ENCODE measurements at regions of chr12 and their contacts with region 1.

Region 1: DNA sequence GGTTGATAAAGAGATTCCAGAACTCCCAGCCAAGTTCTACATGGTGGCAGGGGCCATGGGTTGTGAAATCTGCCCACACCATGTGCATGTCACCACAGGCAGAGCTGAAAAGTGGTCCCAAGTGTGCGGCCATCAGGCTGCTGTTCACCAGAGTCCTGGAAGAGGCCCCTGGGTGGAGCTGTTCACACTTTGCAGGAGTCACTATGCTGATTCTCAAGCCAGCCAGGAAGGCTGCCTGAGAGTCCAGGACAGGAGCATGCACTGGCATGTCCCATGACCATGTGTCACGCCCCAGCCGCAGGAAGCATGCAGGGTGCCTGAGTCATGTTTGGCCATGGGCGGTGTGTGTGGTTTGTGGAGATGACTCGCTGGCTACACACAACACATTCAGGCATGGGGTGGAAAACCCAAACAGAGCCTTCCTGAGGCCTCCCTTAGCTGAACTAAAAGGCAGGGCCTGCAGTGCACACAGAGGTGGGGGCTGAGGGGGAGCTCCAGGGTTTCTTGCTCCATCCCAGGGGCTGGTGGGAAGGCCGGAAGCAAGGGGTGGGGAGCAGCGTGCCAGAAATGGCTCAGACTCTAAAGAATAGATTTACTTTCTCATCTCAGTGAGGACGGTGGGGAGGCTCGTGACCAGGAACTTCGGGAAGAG is 19.4 kb downstream of the ABCB9 start:
- DNase-seq: peak in 1 of 3 donors; percentile 78
- ATAC-seq: peak; percentile 54 to 88 (median 60)
- H3K4me3 ChIP-seq: no peak overlapping the region
- H3K27ac ChIP-seq: no peak overlapping the region
- H3K4me1 ChIP-seq: no peaks in the 10 kb centered on the region
- H3K27me3 ChIP-seq: no peaks in the 10 kb centered on the region
- CTCF ChIP-seq: peak in 1 of 4 donors; percentile 8
- POLR2A ChIP-seq: no peak

Region 2: GRCh38 chr12:122788387-122788786 is 158.4 kb before region 1 on chr12:
- intact Hi-C with region 1: loop called (anchors 5 to 10 kb)
- DNase-seq: peak in 1 of 3 donors; percentile 23
- ATAC-seq: no peak
- H3K4me3 ChIP-seq: no peak overlapping the region
- H3K27ac ChIP-seq: no peak overlapping the region
- H3K4me1 ChIP-seq: no peaks in the 10 kb centered on the region
- H3K27me3 ChIP-seq: no peaks in the 10 kb centered on the region
- CTCF ChIP-seq: no peak
- POLR2A ChIP-seq: no peak

Region 3: GRCh38 chr12:123006977-123007376 is 60.2 kb after region 1 on chr12:
- intact Hi-C with region 1: no loop called
- DNase-seq: no peak
- ATAC-seq: no peak
- H3K4me3 ChIP-seq: no peak overlapping the region
- H3K27ac ChIP-seq: no peak overlapping the region
- H3K4me1 ChIP-seq: no peaks in the 10 kb centered on the region
- H3K27me3 ChIP-seq: no peaks in the 10 kb centered on the region
- CTCF ChIP-seq: no peak
- POLR2A ChIP-seq: no peak

Region 4: DNA sequence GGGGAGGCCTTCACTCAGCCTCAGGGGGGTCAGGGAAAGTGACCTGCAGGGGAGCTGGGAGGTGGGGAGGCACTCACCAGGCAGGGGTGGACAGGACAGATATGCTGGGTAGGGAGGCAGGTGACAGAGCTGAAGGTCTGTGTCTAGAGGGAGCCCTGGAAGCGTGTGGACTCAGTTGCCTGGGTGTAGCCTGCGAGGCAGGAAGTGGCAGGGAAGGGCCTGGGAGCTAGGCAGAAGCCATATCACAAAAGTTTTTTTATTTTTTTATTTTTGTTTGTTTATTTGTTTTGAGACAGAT is 73.0 kb after region 1 on chr12:
- intact Hi-C with region 1: no loop called
- DNase-seq: no peak
- ATAC-seq: peak; percentile 16 to 48 (median 38)
- H3K4me3 ChIP-seq: no peak overlapping the region
- H3K27ac ChIP-seq: peak overlapping the region in 1 of 3 donors; percentile 54
- H3K4me1 ChIP-seq: peaks cover 0 to 14% (median 3%) of the 10 kb centered on the region in 4 donors
- H3K27me3 ChIP-seq: no peaks in the 10 kb centered on the region
- CTCF ChIP-seq: no peak
- POLR2A ChIP-seq: no peak